Activated T-helper 1 cell treated with anti-CD3 and anti-CD28 coated beads, Interleukin-12 subunit alpha, Interleukin-12 subunit beta, Interleukin-2, Interleukin-4 antibody, amounts not matched to agents 30 ng/mL and 10 ng/mL and 1 ng/mL, durations not matched to agents 14 hours and 24 hours and 36 hours (primary cell): ENCODE measurements at regions of chr15 and their contacts with region 1.

Region 1: DNA sequence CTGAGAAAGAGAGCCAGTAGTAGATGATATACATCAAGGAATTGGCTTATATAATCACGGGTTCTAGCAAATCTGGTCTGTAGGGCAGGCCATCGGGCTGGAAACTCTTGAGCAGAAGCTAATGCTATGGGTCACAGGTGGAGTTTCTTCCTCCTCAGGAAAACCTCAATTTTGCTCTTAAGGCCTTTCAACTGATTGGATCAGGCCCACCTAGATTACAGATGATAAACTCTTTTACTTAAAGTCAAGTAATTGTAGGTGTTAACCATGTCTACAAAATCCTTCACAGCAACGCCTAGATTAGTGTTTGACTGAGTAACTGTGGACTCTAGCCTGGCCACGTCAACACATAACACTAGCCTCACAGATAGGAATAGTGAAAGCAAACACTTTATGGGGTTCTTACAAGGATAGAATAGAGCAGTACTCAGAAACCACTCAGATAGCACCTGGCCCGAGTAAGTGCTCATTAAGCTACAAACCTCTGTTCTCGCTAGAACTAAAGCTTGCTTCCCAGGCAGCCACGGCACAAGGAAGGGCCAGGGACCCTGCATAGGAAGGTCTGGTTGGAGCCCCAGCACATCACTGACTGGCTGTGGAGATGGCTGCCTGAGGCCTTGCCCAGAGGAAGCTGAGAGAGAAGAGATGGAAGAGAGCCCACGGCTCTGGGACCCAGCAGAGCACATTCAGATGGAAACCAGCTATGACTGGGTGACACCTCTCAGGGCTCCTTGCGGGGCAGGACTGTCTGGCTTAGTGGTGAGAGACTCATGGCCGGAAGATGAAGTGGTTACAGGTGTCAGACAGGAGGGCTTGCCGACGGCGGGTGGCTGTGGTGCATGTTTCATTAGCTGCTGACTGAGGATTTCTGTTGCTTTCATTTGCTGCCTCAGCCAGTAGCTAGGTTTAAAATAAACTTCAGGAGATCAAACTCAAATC is 202.5 kb upstream of the TLE3 start:
- DNase-seq: peak; percentile 71
- H3K4me3 Mint-ChIP-seq: no peak overlapping the region
- H3K27ac Mint-ChIP-seq: peak overlapping the region; percentile 24
- H3K4me1 Mint-ChIP-seq: peaks cover 9% of the 10 kb centered on the region
- H3K27me3 Mint-ChIP-seq: peaks cover 22% of the 10 kb centered on the region

Region 2: DNA sequence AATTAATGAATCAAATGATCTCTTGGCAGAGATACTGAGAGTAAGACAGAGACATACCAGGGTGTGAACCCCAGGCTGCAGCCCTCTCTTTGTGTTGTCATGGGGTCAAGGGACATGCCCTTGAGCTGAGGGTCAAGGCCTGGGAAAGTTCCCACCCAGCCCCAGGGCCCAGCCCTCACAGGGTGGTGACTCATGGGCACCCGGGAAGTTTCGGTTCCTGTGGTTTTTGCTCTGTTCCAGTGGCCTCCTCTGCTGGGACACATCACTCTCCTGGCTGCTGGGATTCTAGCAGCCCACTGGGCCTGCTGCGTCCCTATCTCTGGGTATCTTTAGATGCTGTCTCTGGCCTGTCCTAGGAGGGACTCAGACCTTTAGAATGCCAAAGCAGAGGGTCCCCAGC is 54.3 kb before region 1 on chr15:
- intact Hi-C with region 1: no loop called
- DNase-seq: no peak
- H3K4me3 Mint-ChIP-seq: no peak overlapping the region
- H3K27ac Mint-ChIP-seq: no peak overlapping the region
- H3K4me1 Mint-ChIP-seq: peaks cover 24% of the 10 kb centered on the region
- H3K27me3 Mint-ChIP-seq: peaks cover 27% of the 10 kb centered on the region

Region 3: GRCh38 chr15:70437882-70438331 is 137.7 kb after region 1 on chr15:
- intact Hi-C with region 1: loop called (anchors 1 kb)
- DNase-seq: no peak
- H3K4me3 Mint-ChIP-seq: no peak overlapping the region
- H3K27ac Mint-ChIP-seq: no peak overlapping the region
- H3K4me1 Mint-ChIP-seq: peaks cover 24% of the 10 kb centered on the region
- H3K27me3 Mint-ChIP-seq: peaks cover 34% of the 10 kb centered on the region